ENCODE measurements at regions of chr9 and their contacts with region 1.

Region 1: DNA sequence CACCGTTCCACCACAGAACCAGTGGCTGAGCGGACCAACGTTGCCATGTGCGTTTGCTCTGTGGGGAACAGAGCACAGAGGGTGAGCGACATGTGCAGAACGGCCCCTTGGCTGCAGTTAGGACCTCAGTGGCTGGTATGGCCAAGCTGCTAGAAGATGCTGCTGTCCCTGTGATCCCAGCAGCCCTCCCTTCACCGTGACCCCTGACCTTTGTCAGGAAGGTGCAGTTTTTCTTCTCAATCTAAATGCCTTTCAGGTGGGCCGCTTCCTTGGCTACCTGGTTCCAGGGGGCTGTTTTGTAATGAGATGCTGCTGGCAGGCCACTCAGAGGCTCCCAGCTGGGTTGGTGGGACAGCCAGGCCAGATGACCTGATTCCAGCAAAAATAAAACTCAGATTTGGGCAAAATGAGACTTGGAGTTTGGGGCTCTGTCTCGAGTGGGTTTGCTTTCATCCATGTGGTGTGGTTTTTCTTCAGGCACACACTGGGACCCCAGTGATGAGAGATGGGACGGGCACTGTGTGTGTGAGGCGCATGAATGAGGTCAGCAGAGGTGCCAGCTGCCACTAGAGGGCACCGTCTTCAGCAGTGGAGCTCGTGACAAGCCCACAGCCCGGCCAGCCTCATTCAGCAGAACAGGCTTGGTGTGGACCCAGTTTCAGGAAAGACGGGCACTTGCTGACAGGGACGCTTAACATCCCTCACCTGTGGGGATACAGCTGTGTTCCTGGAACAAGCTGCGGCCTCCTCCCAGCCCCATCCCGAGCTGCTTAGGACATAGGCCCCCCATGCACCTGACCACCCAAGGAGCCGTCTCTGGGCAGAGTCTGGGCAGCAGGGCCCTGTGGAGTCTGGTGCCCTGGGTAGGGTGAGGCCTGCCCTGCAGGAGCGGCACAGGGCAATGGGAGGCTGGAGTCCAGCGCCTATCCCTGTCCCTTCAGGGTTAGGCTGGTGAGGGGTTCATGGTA is 4.1 kb downstream of the MRPS2 start:
- DNase-seq: peak; percentile 73
- ATAC-seq: peak; percentile 26
- H3K4me3 Mint-ChIP-seq: no peak overlapping the region
- H3K27ac Mint-ChIP-seq: no peak overlapping the region
- H3K4me1 Mint-ChIP-seq: peaks cover 13% of the 10 kb centered on the region
- H3K27me3 Mint-ChIP-seq: peaks cover under 1% of the 10 kb centered on the region
- CTCF ChIP-seq: peak; percentile 65

Region 2: GRCh38 chr9:135492886-135493669 is 11.5 kb before region 1 on chr9:
- CTCF ChIA-PET with region 1: interaction called, 11 read pairs
- POLR2A ChIA-PET with region 1: interaction called, 6 read pairs
- intact Hi-C with region 1: no loop called
- DNase-seq: no peak
- ATAC-seq: no peak
- H3K4me3 Mint-ChIP-seq: no peak overlapping the region
- H3K27ac Mint-ChIP-seq: no peak overlapping the region
- H3K4me1 Mint-ChIP-seq: no peaks in the 10 kb centered on the region
- H3K27me3 Mint-ChIP-seq: no peaks in the 10 kb centered on the region
- CTCF ChIP-seq: no peak

Region 3: DNA sequence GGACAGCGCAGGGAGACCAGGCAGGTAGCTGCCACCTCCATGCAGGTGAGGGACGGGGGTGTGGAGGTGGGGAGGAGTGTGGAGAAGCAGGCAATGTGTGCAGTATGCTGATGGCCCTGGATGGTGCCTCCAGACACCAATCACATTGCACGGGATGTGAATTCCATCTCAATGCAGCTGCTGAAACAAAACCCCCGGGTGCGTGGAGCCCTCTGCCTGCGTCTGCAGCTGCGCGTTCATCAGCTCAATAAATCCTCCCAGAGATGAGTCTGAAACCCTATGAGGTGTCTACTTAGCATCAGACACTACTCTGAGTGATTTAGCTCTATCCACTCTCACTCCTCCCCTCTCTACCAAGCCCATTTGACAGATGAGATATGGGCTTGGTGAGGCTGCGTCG is 184.5 kb after region 1 on chr9:
- CTCF ChIA-PET with region 1: no interaction called
- POLR2A ChIA-PET with region 1: no interaction called
- intact Hi-C with region 1: no loop called
- DNase-seq: no peak
- ATAC-seq: no peak
- H3K4me3 Mint-ChIP-seq: no peak overlapping the region
- H3K27ac Mint-ChIP-seq: no peak overlapping the region
- H3K4me1 Mint-ChIP-seq: no peaks in the 10 kb centered on the region
- H3K27me3 Mint-ChIP-seq: peaks cover 1% of the 10 kb centered on the region
- CTCF ChIP-seq: no peak

Region 4: DNA sequence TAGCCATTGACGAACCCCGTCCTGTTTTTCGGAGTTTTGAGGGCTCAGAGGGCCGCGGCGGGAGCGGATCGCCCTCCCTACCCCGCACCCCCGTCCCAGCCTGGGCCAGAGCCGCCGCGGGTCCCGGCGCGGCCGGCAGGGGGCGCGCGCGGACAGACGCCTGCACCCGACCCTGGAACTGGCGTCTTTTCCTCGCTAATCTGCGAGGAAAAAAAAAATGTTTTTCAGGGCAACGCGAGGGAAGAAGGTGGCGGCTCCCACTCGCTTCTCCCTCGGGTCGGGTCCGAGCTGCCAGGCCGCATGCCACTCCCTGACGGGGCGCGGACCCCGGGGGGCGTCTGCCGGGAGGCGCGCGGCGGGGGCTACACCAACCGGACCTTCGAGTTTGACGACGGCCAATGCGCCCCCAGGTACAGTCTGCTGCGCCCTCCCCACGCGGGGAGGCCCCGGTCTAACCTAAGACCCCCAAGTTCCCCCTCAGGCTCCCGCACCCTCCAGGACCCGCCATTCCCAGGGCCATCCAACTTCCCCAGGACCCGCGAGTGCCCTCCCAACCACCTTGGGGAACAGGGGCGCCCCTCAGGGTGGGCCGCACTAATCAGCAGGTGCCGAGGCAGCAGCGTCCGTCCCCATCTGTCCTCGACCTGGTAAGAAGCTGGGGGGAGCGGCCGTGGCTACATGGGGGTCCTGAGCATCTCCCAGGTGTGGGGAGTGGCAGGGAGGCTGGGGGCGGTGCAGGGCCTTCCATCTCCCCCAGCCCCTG is 197.6 kb after region 1 on chr9 and contains the start of gene KCNT1:
- CTCF ChIA-PET with region 1: no interaction called
- POLR2A ChIA-PET with region 1: no interaction called
- intact Hi-C with region 1: no loop called
- DNase-seq: peak; percentile 65
- ATAC-seq: peak; percentile 84
- H3K4me3 Mint-ChIP-seq: no peak within 1 kb of the TSS
- H3K27ac Mint-ChIP-seq: no peak within 1 kb of the TSS
- H3K4me1 Mint-ChIP-seq: no peaks in the 10 kb centered on the region
- H3K27me3 Mint-ChIP-seq: peaks cover 14% of the 10 kb centered on the region
- CTCF ChIP-seq: peak; percentile 93
- total RNA-seq, gene KCNT1: not detected